PC-9 (cell line): ENCODE measurements at regions of chr7 and their contacts with region 1.

Region 1: DNA sequence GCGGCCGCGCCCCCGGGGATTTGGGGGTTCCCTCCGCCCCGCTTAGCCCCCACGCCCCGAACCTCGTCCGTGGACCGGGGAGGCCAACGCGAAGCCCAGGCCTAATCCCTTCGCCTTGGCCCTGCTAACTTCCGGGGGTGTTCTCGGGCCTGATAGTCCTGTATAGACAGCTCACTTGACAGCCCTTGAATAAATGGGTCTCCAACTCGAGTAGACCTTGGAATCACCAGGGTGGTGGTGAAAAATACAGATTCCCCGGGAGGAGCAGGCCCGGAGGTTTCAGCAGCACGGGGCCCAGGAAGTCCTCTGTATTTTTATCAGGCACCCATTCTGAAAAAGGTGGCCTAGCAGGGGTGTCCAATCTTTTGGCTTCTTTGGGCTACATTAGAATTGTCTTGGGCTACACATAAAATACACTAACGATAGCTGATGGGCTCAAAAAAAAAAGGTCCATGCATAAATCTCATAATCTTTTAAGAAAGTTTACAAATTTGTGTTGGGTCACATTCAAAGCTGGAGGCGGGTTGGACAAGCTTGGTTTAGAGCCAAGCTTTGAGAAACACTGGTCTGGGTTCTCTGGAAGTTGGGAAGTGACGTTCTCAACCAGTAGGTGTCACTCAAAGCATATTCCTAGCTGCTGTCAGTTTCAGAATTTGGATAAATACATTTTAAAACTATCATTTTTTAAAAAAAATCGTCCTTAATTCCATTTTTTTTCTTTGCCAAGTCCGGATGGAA is 221.7 kb downstream of the PHTF2 start:
- DNase-seq: peak; percentile 52 to 61
- H3K4me3 ChIP-seq: peak overlapping the region; percentile 80; the same call in 1 of the 2 replicates
- H3K27ac ChIP-seq: no peak overlapping the region
- H3K4me1 ChIP-seq: no peaks in the 10 kb centered on the region
- H3K27me3 ChIP-seq: peaks cover 21% of the 10 kb centered on the region; the same call in 1 of the 2 replicates
- CTCF ChIP-seq: peak; percentile 77

Region 2: DNA sequence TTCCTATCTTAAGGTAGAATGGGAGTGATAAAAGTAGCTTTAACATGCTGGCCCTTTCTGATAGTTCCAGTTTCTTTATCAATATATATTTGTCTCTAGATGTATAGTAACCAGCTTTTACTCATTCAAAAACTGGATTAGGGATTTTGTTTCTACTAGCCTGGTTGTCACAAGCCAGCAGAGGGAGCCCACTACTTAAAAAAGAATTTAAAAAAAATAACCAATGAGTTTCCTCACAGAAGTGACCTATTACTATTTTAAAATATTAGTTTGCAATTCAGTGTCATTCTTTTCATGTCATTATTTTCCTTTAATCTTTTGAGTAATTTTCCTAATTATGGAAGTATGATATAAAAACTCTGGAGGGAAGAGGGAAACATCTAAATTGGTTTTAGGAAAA is 79.7 kb before region 1 on chr7:
- CTCF ChIA-PET with region 1: interaction called, 4 read pairs
- POLR2A ChIA-PET with region 1: no interaction called
- intact Hi-C with region 1: loop called (anchors 2 kb)
- DNase-seq: peak in 1 of 2 experiments; percentile 31
- H3K4me3 ChIP-seq: no peak overlapping the region
- H3K27ac ChIP-seq: no peak overlapping the region
- H3K4me1 ChIP-seq: no peaks in the 10 kb centered on the region
- H3K27me3 ChIP-seq: no peaks in the 10 kb centered on the region
- CTCF ChIP-seq: peak; percentile 82

Region 3: DNA sequence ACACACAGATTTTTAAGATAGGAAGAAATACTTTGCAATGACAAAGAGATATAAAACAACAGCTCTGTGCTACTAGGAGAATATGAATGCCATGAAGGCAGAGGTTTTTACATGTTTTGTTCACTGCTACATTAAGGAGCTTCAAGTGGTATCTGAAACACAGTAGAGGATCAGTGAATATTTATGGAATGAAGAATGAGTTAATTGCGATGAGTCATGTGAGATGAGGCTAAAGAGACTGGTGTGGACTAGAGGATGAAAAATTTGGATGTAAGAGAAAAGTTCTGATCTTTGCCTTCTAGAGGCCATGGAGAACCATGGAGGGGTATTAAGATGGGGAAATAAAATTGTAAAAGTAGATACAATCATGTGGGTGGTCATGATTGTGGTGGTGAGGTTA is 212.5 kb after region 1 on chr7:
- CTCF ChIA-PET with region 1: no interaction called
- POLR2A ChIA-PET with region 1: no interaction called
- intact Hi-C with region 1: loop called (anchors 5 kb)
- DNase-seq: no peak
- H3K4me3 ChIP-seq: no peak overlapping the region
- H3K27ac ChIP-seq: no peak overlapping the region
- H3K4me1 ChIP-seq: no peaks in the 10 kb centered on the region
- H3K27me3 ChIP-seq: no peaks in the 10 kb centered on the region
- CTCF ChIP-seq: no peak

Region 4: GRCh38 chr7:78510580-78511188 is 490.4 kb after region 1 on chr7:
- CTCF ChIA-PET with region 1: no interaction called
- POLR2A ChIA-PET with region 1: no interaction called
- intact Hi-C with region 1: loop called (anchors 2 kb)
- DNase-seq: peak in 1 of 2 experiments; percentile 40
- H3K4me3 ChIP-seq: no peak overlapping the region
- H3K27ac ChIP-seq: no peak overlapping the region
- H3K4me1 ChIP-seq: no peaks in the 10 kb centered on the region
- H3K27me3 ChIP-seq: no peaks in the 10 kb centered on the region
- CTCF ChIP-seq: peak; percentile 66

Region 5: DNA sequence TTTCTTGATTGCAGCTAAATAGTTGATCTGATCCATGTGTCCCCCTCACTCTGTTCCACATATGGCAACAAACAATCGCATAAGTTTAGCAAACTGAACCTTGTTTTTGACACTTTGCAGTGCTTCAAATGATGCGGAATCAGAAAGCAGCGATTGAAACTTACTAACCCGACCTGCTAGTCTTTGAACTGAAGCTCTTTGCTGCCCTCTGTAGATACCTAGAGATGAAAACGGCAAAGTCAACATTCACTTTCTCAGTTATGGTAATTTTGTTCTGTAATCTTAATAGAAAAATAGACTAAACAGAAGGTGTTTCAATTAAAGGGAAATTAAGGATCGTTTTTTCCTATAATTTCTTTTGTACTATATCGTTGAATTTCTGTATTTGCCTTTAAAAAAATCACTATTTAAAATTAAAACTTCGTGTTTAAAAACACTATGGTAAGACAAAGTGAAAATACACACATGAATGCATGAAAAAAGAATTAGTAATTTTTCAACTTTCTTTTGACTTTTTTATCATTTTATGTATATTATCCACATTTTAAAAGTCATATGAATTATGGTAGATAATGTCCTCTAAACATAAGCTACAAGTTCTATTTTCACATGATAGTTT is 1156.7 kb after region 1 on chr7:
- CTCF ChIA-PET with region 1: no interaction called
- POLR2A ChIA-PET with region 1: no interaction called
- intact Hi-C with region 1: loop called (anchors 5 kb)
- DNase-seq: peak in 1 of 2 experiments; percentile 16
- H3K4me3 ChIP-seq: no peak overlapping the region
- H3K27ac ChIP-seq: no peak overlapping the region
- H3K4me1 ChIP-seq: no peaks in the 10 kb centered on the region
- H3K27me3 ChIP-seq: no peaks in the 10 kb centered on the region
- CTCF ChIP-seq: peak; percentile 73